IMR-90 (cell line): ENCODE measurements at regions of chr9 and their contacts with region 1.

Region 1: GRCh38 chr9:79646096-79646495 is 74.3 kb downstream of the TLE4 start:
- DNase-seq: no peak
- ATAC-seq: no peak
- H3K4me3 ChIP-seq: no peak overlapping the region
- H3K27ac ChIP-seq: no peak overlapping the region
- H3K4me1 ChIP-seq: no peaks in the 10 kb centered on the region; the same call in 1 of the 2 replicates
- H3K27me3 ChIP-seq: no peaks in the 10 kb centered on the region
- CTCF ChIP-seq: no peak
- POLR2A ChIP-seq: no peak
- RAD21 ChIP-seq: no peak

Region 2: GRCh38 chr9:79630521-79631403 is 15.3 kb before region 1 on chr9:
- CTCF ChIA-PET with region 1: no interaction called
- POLR2A ChIA-PET with region 1: interaction called, 4 read pairs
- dilution Hi-C with region 1: no loop called
- in situ Hi-C with region 1: no loop called
- intact Hi-C with region 1: loop called (anchors 2 kb)
- DNase-seq: no peak
- ATAC-seq: no peak
- H3K4me3 ChIP-seq: no peak overlapping the region
- H3K27ac ChIP-seq: no peak overlapping the region
- H3K4me1 ChIP-seq: no peaks in the 10 kb centered on the region
- H3K27me3 ChIP-seq: no peaks in the 10 kb centered on the region
- CTCF ChIP-seq: no peak
- POLR2A ChIP-seq: no peak
- RAD21 ChIP-seq: no peak